Motor neuron (in vitro differentiated cells): ENCODE measurements at regions of chr5 and their contacts with region 1.

Region 1: DNA sequence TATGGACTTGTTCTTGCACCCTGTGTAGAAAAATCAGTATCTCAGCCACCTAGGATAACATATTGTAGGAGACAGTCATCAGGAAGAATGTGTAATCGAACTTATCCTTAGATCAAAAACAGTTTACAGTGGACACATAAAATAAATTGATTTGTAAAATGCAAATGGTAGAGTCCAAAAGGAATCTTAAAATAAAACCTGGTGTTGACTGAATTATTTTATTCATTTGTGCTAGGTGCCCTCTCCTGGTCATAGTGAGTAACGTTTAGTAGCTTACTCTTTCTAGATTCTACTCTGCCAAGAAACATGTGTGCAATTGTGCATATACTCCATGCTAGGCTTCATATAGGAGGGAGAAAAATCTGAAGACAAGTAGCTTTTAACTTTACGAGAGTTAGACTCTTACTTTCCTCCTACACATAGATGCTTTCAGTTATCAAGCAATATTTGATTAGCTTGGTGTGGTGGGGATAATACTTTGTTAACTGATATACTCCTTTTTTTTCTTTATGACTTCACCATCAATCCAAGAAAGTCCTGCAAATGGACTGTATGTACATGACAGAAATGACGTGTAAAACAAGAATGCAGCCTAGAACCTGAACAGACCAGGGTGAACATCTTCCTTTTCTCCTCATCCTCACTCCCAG is 23.7 kb upstream of the LOX start:
- ATAC-seq: peak in 5 of 8 experiments; percentile 46 to 86 (median 75)
- H3K4me3 ChIP-seq: no peak overlapping the region
- H3K27ac ChIP-seq: no peak overlapping the region
- H3K4me1 ChIP-seq: peaks cover 0 to 6% of the 10 kb centered on the region in 2 donors

Region 2: GRCh38 chr5:121968910-121969607 is 132.7 kb before region 1 on chr5:
- in situ Hi-C with region 1: loop called in 2 of 9 experiments (anchors 10 to 25 kb)
- ATAC-seq: peak in 4 of 8 experiments; percentile 58 to 98 (median 94)
- H3K4me3 ChIP-seq: no peak overlapping the region
- H3K27ac ChIP-seq: no peak overlapping the region
- H3K4me1 ChIP-seq: no peaks in the 10 kb centered on the region